ENCODE measurements at regions of chr2 and their contacts with region 1.

Region 1: DNA sequence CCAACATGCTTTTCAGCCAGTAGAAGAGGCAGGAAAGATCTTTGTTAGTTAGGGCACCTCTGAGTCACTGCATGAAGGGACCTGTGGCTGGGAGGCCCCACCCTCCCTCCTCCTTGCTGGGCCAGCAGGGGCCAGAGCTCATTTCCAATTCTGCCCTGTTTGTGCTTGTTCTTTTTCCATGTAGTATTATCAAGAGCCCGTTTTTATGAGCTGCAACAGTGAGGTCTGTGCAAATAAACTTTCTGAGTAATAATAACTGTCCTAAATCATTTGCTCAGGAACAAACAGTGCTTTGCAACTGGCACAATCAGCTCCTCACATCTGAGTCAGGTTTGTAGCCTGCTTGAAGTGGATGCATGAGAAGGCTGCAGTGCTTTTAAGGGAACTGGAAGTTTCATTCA is 128.0 kb downstream of the ARL4C start:
- DNase-seq: no peak
- ATAC-seq: no peak
- H3K4me3 ChIP-seq: no peak overlapping the region
- H3K4me3 Mint-ChIP-seq: no peak overlapping the region
- H3K27ac ChIP-seq: no peak overlapping the region
- H3K27ac Mint-ChIP-seq: no peak overlapping the region
- H3K4me1 ChIP-seq: peaks cover under 1 to 5% of the 10 kb centered on the region in 2 donors
- H3K4me1 Mint-ChIP-seq: peaks cover 13% of the 10 kb centered on the region
- H3K27me3 ChIP-seq: peaks cover 0 to 12% (median 2%) of the 10 kb centered on the region in 4 experiments
- H3K27me3 Mint-ChIP-seq: peaks cover 18% of the 10 kb centered on the region
- CTCF ChIP-seq: no peak

Region 2: DNA sequence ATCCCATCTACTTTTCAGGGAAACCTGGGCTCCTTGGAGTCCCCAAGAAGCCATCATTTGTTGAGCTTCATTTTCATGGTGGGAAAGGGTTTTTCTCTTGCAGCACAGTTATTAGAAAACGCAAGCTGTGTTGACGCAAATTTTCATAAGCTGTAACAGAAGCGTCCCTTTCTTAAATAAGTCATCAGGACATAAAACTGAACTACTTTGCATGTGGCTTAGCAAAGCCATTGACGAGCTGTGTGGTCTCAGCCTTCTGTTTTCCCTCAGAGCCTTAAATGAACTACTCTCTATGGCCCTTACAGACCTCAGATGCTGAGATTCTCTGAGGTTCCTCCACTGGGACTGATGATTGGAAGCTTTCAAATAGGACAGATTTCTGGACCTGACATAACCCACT is 42.9 kb after region 1 on chr2:
- CTCF ChIA-PET with region 1: no interaction called
- POLR2A ChIA-PET with region 1: no interaction called
- intact Hi-C with region 1: loop called (anchors 10 kb)
- DNase-seq: peak; percentile 64
- ATAC-seq: peak; percentile 79
- H3K4me3 ChIP-seq: peak overlapping the region in 1 of 5 experiments; percentile 8
- H3K4me3 Mint-ChIP-seq: peak overlapping the region; percentile 23
- H3K27ac ChIP-seq: no peak overlapping the region
- H3K27ac Mint-ChIP-seq: peak overlapping the region; percentile 38
- H3K4me1 ChIP-seq: peaks cover 40 to 42% of the 10 kb centered on the region in 2 donors
- H3K4me1 Mint-ChIP-seq: peaks cover 54% of the 10 kb centered on the region
- H3K27me3 ChIP-seq: no peaks in the 10 kb centered on the region
- H3K27me3 Mint-ChIP-seq: no peaks in the 10 kb centered on the region
- CTCF ChIP-seq: no peak

Measured in B cell (primary cell).